ENCODE measurements at regions of chr2 and their contacts with region 1.

Region 1: DNA sequence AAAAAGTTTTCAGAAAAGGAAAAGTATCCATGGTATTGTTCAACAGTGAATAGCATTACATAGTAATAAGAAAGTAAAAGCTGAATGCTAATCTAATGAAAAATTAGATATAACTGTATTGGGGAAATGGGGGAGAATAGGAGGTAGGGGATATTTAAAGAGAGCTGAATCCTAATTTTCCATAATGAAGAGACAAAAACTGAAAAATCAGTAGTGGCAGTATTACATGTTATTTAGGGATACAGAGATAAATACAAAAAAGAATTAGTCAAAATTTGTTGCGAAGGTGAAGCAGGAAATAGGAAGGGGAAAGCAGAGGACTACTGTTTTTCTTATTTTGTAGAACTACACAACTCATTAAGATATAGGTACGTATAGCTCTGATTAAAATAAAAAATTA is 9.1 kb downstream of the TANK start:
- DNase-seq: no peak
- H3K4me3 ChIP-seq: no peak overlapping the region
- H3K27me3 ChIP-seq: no peaks in the 10 kb centered on the region
- CTCF ChIP-seq: no peak

Region 2: GRCh38 chr2:160803881-160804280 is 365.5 kb before region 1 on chr2:
- CTCF ChIA-PET with region 1: no interaction called
- POLR2A ChIA-PET with region 1: no interaction called
- DNase-seq: no peak
- H3K4me3 ChIP-seq: no peak overlapping the region
- H3K27me3 ChIP-seq: no peaks in the 10 kb centered on the region
- CTCF ChIP-seq: no peak

Region 3: DNA sequence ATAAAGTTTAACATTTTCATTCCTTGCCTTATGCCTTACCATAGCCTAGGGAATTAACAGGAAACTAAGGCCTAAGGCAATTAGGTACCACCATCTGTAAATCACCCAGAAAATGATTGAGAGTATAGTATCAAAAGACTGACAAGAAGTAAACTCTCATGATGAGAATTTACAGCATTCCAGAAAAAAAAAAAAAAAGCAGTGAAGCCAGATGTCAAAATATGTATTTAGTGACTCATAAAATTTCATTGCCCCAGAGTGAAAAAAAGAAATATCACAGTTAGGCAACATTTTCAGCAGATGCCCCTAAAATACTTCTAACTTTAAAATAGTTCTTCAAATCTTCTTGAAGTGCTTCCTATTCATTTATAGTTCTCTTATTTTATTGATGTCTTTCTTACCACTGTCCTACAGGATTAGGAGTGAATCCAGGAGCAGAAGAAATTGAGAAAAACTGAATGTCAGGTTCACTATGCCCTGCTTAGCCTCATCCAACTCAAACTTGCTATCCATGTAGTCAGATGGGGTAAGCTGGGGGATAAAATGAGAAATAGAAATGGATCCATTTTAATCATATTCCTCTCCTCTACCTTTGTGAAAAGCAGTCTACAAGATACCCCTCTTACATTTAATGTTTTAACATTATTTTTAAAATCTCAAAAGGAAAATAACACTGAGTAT is 66.4 kb before region 1 on chr2:
- CTCF ChIA-PET with region 1: no interaction called
- POLR2A ChIA-PET with region 1: interaction called, 20 read pairs
- DNase-seq: no peak
- H3K4me3 ChIP-seq: no peak overlapping the region
- H3K27me3 ChIP-seq: 0 out of 2 replicates have a peak, but pooled peaks cover 2% of the 10 kb centered on the region
- CTCF ChIP-seq: no peak

Region 4: GRCh38 chr2:161273038-161273760 is 103.9 kb after region 1 on chr2:
- CTCF ChIA-PET with region 1: no interaction called
- POLR2A ChIA-PET with region 1: no interaction called
- DNase-seq: no peak
- H3K4me3 ChIP-seq: no peak overlapping the region
- H3K27me3 ChIP-seq: no peaks in the 10 kb centered on the region
- CTCF ChIP-seq: peak; percentile 62

Region 5: GRCh38 chr2:161321944-161322648 is 152.8 kb after region 1 on chr2:
- CTCF ChIA-PET with region 1: no interaction called
- POLR2A ChIA-PET with region 1: no interaction called
- DNase-seq: no peak
- H3K4me3 ChIP-seq: no peak overlapping the region
- H3K27me3 ChIP-seq: no peaks in the 10 kb centered on the region
- CTCF ChIP-seq: no peak

Measured in BJ (cell line).